ENCODE measurements at regions of chr2 and their contacts with region 1.

Region 1: DNA sequence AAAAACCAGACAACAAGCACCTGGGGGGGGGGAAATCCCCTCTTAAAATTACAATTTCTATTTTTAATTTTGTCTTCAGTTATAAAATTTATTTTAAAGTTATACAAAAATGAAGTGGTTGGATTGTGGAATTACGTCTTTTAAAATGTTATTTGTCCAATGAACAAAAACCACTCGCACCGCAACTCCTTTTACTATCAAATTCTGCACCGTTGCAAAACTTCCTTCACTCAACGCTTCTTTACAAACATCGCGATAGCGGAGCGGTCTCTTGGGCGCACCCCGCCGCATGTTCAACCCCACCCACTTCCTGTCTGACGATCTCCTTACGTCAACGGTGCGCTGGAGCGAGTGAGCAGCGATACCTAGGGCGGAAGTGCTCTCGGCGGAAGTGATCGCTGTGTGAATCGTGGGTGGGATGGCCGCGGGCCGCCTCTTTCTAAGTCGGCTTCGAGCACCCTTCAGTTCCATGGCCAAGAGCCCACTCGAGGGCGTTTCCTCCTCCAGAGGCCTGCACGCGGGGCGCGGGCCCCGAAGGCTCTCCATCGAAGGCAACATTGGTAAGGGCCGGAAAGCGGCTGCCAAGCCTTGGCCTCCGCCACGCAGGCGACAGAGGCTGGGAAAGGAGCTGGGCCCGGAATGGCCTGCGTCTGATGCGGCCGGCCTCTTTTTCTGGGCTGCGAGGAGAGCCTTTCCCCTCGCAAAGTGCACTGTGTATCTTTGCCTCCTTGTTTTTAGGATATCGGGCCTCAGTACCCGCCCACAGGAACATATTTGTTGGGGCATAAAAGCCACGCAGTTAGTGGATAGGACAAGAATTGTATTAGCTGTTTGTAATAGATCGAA is at the start of gene DGUOK:
- DNase-seq: peak; percentile 98 to 99
- ATAC-seq: peak; percentile 100
- H3K4me3 ChIP-seq: peak within 1 kb of the TSS; percentile 32 to 79
- H3K27ac ChIP-seq: peak within 1 kb of the TSS; percentile 88 to 90
- H3K4me1 ChIP-seq: peaks cover 3 to 5% of the 10 kb centered on the region in 2 donors
- H3K27me3 ChIP-seq: no peaks in the 10 kb centered on the region
- total RNA-seq, gene DGUOK: 47.5 to 49.8 TPM

Region 2: GRCh38 chr2:73907840-73908452 is 18.8 kb before region 1 on chr2:
- intact Hi-C with region 1: no loop called
- DNase-seq: no peak
- ATAC-seq: peak; percentile 50
- H3K4me3 ChIP-seq: no peak overlapping the region
- H3K27ac ChIP-seq: no peak overlapping the region
- H3K4me1 ChIP-seq: no peaks in the 10 kb centered on the region
- H3K27me3 ChIP-seq: no peaks in the 10 kb centered on the region

Region 3: GRCh38 chr2:73970850-73971471 is 44.2 kb after region 1 on chr2:
- intact Hi-C with region 1: no loop called
- DNase-seq: peak; percentile 83 to 88
- ATAC-seq: peak; percentile 82
- H3K4me3 ChIP-seq: no peak overlapping the region
- H3K27ac ChIP-seq: peak overlapping the region in 1 of 2 donors; percentile 29
- H3K4me1 ChIP-seq: no peaks in the 10 kb centered on the region
- H3K27me3 ChIP-seq: no peaks in the 10 kb centered on the region

Region 4: DNA sequence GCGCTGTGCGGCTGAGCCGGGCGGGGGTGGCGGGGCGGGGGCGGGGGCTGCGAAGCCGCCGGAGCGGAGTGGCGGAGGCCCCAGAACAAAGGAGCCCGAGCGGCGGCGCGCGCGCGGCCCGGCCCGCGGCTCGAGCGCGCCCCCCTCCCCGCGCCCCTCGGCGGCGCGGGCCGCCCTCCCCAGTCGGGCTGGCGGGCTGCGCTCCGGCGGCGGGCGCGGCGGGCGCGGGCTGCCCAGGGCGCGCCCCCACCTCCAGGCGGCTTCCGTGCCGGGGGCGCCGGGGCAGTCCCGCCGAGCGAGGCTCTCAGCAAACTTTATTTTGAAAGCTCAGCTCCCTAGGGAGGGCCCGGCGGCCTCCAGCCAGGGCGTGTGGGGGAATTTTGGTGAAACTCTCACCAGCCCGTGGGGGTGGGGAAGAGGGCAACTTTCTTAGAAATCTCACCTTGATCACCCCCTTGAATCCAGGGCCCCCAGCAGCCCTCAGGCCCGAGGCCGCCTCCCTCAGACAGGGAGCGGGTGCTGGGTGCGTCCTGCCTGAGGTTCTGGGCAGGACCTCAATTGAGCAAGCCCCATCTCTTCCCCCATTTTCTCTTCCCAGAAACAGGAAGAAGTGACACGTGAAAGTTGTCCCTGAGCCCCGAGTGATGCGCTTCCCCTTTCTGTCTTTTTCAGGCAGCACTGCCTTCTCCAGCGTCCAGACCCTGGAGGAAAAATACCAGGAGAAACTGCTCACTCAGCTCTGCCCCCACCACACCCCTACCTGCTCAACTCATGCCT is 58.8 kb after region 1 on chr2:
- intact Hi-C with region 1: loop called in 1 of 2 experiments (anchors 5 kb)
- DNase-seq: peak; percentile 67 to 86
- ATAC-seq: no peak
- H3K4me3 ChIP-seq: peak overlapping the region; percentile 61 to 91
- H3K27ac ChIP-seq: no peak overlapping the region
- H3K4me1 ChIP-seq: no peaks in the 10 kb centered on the region
- H3K27me3 ChIP-seq: no peaks in the 10 kb centered on the region

Region 5: GRCh38 chr2:74002487-74003391 is 76.0 kb after region 1 on chr2:
- intact Hi-C with region 1: loop called in 1 of 2 experiments (anchors 5 kb)
- DNase-seq: peak; percentile 89 to 94
- ATAC-seq: peak; percentile 96
- H3K4me3 ChIP-seq: peak overlapping the region; percentile 46 to 82
- H3K27ac ChIP-seq: peak overlapping the region in 1 of 2 donors; percentile 58
- H3K4me1 ChIP-seq: no peaks in the 10 kb centered on the region
- H3K27me3 ChIP-seq: no peaks in the 10 kb centered on the region

Measured in aorta (tissue), 5 donors.